CD8-positive, alpha-beta memory T cell (primary cell): ENCODE measurements at regions of chr2 and their contacts with region 1.

Region 1: DNA sequence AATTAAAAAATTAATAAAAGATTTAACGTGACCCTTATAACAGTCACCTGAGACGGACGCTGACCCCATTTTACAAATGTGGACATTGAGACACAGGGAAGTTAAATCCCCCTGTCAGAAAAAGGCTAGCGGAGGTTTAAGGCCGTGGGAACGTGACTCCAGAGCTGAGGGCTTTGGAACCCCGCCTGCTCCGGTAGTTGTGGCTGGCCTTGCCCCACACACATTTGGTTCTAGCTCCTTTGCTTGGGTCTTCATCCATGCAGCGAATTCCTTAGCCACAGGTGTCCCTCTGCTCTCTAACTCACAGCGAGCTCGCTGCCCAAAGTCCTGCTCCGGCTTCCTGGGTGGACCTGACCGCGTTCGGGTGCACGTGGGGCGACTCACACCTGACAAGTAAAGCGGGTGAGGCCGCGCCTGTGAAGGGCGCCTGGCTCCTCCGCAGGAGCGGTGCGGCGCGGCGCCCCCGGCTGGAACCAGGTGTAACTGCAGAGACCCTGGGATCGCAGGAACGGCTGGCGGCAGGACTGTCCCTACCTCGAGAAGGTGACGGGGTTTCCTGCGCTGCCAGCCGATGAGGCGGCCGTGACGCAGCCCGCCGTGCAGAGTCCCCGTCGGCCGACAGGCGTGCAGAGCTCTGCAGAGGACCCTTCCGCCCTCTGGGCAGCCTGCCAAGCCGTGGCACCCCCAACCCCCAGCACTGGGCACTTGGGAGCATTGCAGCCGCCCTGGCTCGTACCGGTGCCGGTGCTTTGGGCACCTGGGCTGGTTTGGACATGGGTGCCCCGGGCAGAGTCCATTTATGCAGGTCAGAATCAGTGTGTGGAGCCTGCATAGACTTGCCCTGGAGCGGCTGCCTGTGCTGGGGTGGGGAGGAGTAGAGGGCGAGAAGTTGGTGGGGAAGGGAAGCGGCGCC is 2.4 kb upstream of the PROC start:
- DNase-seq: peak; percentile 76 to 89 (median 78)
- H3K4me3 ChIP-seq: peak overlapping the region; percentile 75
- H3K4me3 Mint-ChIP-seq: peak overlapping the region; percentile 54 to 93 (median 85)
- H3K27ac ChIP-seq: no peak overlapping the region
- H3K27ac Mint-ChIP-seq: peak overlapping the region in 7 of 8 donors; percentile 45 to 97 (median 90)
- H3K4me1 ChIP-seq: peaks cover 15% of the 10 kb centered on the region
- H3K4me1 Mint-ChIP-seq: peaks cover 21 to 32% (median 25%) of the 10 kb centered on the region in 3 donors
- H3K27me3 ChIP-seq: no peaks in the 10 kb centered on the region
- H3K27me3 Mint-ChIP-seq: peaks cover 0 to 7% of the 10 kb centered on the region in 2 donors

Region 2: GRCh38 chr2:127387655-127388422 is 28.0 kb before region 1 on chr2 and contains the start of gene MAP3K2:
- CTCF ChIA-PET with region 1: interaction called, 16 read pairs
- POLR2A ChIA-PET with region 1: no interaction called
- DNase-seq: peak; percentile 91 to 97 (median 95)
- H3K4me3 ChIP-seq: peak within 1 kb of the TSS; percentile 92
- H3K4me3 Mint-ChIP-seq: peak within 1 kb of the TSS; percentile 89 to 95 (median 91)
- H3K27ac ChIP-seq: peak within 1 kb of the TSS; percentile 99
- H3K27ac Mint-ChIP-seq: peak within 1 kb of the TSS; percentile 99 to 100 (median 100)
- H3K4me1 ChIP-seq: peaks cover 45% of the 10 kb centered on the region
- H3K4me1 Mint-ChIP-seq: peaks cover 51 to 66% (median 60%) of the 10 kb centered on the region in 3 donors
- H3K27me3 ChIP-seq: no peaks in the 10 kb centered on the region
- H3K27me3 Mint-ChIP-seq: peaks cover 0 to 5% of the 10 kb centered on the region in 2 donors
- total RNA-seq, gene MAP3K2: 55.9 to 57.7 TPM

Region 3: GRCh38 chr2:127398239-127398590 is 17.6 kb before region 1 on chr2:
- CTCF ChIA-PET with region 1: interaction called, 11 read pairs
- POLR2A ChIA-PET with region 1: no interaction called
- DNase-seq: peak in 1 of 5 donors; percentile 70
- H3K4me3 ChIP-seq: no peak overlapping the region
- H3K4me3 Mint-ChIP-seq: no peak overlapping the region
- H3K27ac ChIP-seq: no peak overlapping the region
- H3K27ac Mint-ChIP-seq: peak overlapping the region in 1 of 8 donors; percentile 74
- H3K4me1 ChIP-seq: no peaks in the 10 kb centered on the region
- H3K4me1 Mint-ChIP-seq: peaks cover 0 to 6% (median 2%) of the 10 kb centered on the region in 3 donors
- H3K27me3 ChIP-seq: no peaks in the 10 kb centered on the region
- H3K27me3 Mint-ChIP-seq: peaks cover 0 to 2% of the 10 kb centered on the region in 2 donors

Region 4: DNA sequence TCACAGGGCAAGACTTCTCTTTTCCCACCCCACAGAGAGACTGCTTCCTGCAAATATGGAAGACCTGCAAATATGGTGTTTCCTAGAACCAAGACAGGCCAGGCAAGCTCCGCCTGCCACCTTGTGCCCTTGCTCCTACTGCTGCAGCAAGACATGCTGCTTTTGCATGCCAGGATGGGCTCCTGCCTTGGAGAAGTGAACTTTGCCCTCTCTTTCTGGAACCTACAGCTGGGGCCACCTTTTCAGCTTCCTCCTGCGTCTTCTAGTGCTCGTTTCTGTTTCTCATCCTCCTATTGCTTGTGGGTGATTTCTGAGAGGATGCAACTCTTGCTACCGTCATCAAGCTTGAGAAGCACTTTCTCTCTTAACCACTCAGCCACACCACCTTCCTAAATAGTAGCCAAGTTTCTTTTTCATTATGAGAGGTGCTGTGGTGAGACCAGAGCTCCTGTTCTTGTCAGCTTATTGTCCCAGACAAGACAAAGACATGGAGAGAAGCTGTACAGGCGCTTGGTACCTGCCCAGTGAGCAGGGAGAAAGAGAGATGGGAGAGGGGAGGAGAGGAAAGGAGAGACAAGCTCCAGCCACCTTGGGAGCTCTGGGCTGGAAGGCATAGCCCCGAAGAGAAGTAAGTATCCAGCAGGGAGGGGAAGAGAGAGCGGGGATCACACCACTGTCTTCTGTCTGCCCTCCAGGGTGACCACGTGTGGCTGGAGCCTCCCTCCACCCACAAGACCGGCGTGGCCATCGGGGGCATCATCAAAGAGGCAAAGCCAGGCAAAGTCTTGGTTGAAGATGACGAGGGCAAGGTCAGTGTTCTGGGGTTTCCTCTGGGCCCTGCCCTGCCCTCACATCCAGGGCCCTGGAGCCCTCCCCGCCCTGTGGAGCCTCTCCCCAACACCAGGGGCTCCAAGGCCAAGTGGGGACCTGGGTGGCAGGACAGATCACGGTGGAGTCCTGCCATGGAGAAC is 147.9 kb after region 1 on chr2:
- CTCF ChIA-PET with region 1: no interaction called
- POLR2A ChIA-PET with region 1: no interaction called
- DNase-seq: no peak
- H3K4me3 ChIP-seq: no peak overlapping the region
- H3K4me3 Mint-ChIP-seq: no peak overlapping the region
- H3K27ac ChIP-seq: no peak overlapping the region
- H3K27ac Mint-ChIP-seq: no peak overlapping the region
- H3K4me1 ChIP-seq: no peaks in the 10 kb centered on the region
- H3K4me1 Mint-ChIP-seq: peaks cover 0 to 6% (median 5%) of the 10 kb centered on the region in 3 donors
- H3K27me3 ChIP-seq: no peaks in the 10 kb centered on the region
- H3K27me3 Mint-ChIP-seq: peaks cover 9 to 12% of the 10 kb centered on the region in 2 donors